ENCODE measurements at regions of chrX and their contacts with region 1.

Region 1: GRCh38 chrX:72142094-72142793 is 10.5 kb upstream of the RTL5 start:
- DNase-seq: no peak
- H3K4me3 Mint-ChIP-seq: no peak overlapping the region
- H3K27ac Mint-ChIP-seq: no peak overlapping the region
- H3K4me1 Mint-ChIP-seq: peaks cover 29% of the 10 kb centered on the region
- H3K27me3 Mint-ChIP-seq: no peaks in the 10 kb centered on the region

Region 2: DNA sequence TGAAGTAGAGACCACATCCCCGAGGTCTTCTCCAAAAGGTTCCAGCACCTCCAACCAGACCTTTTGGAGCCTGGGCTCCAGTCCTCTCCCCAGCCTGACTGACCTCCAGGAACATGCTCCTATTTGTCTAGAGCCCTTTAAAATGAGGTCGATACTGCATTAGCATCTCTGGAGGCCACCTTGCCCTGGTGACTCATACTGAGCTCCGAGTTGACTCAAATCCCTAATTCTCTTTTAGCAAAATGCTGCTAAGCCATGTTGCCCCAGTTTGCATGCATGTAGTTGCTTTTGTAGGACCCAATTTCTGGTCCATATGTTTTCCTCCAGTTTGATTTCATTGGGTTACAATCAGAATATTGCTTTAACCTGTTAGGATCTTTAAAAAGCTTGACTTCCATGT is 206.9 kb after region 1 on chrX:
- CTCF ChIA-PET with region 1: no interaction called
- POLR2A ChIA-PET with region 1: no interaction called
- intact Hi-C with region 1: loop called (anchors 5 kb)
- DNase-seq: peak; percentile 56
- H3K4me3 Mint-ChIP-seq: no peak overlapping the region
- H3K27ac Mint-ChIP-seq: peak overlapping the region; percentile 75
- H3K4me1 Mint-ChIP-seq: peaks cover 21% of the 10 kb centered on the region
- H3K27me3 Mint-ChIP-seq: no peaks in the 10 kb centered on the region

Measured in activated CD4-positive, alpha-beta memory T cell treated with anti-CD3 and anti-CD28 coated beads for 36 hours (primary cell).